ENCODE measurements at regions of chr9 and their contacts with region 1.

Region 1: GRCh38 chr9:21317956-21318923 is 13.1 kb upstream of the IFNA5 start:
- DNase-seq: no peak
- H3K4me3 ChIP-seq: no peak overlapping the region
- H3K27ac ChIP-seq: no peak overlapping the region
- H3K4me1 ChIP-seq: no peaks in the 10 kb centered on the region
- H3K27me3 ChIP-seq: no peaks in the 10 kb centered on the region
- CTCF ChIP-seq: peak in 2 of 3 experiments; percentile 60 to 64; a peak in 3 of 4 replicates
- EP300 ChIP-seq: no peak
- POLR2A ChIP-seq: no peak
- RAD21 ChIP-seq: peak; percentile 65 to 75

Region 2: DNA sequence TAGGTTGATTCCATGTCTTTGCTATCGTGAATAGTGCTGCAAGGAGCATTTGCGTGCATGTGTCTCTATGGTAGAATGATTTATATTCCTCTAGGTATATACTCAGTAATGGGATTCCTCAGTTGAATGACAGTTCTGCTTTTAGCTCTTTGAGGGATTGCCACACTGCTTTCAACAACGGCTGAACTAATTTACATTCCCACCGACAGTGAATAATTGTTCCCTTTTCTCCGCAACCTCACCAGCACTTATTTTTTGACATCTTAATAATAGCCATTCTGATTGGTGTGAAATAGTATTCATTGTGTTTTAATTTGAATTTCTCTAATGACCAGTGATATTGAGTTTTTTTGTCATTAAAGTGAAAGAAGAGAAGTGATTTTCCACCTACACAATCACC is 31.6 kb before region 1 on chr9:
- CTCF ChIA-PET with region 1: no interaction called
- POLR2A ChIA-PET with region 1: no interaction called
- DNase-seq: no peak
- H3K4me3 ChIP-seq: no peak overlapping the region
- H3K27ac ChIP-seq: no peak overlapping the region
- H3K4me1 ChIP-seq: no peaks in the 10 kb centered on the region
- H3K27me3 ChIP-seq: no peaks in the 10 kb centered on the region; a peak in 1 of 7 replicates
- CTCF ChIP-seq: no peak
- EP300 ChIP-seq: no peak
- POLR2A ChIP-seq: no peak
- RAD21 ChIP-seq: no peak

Region 3: DNA sequence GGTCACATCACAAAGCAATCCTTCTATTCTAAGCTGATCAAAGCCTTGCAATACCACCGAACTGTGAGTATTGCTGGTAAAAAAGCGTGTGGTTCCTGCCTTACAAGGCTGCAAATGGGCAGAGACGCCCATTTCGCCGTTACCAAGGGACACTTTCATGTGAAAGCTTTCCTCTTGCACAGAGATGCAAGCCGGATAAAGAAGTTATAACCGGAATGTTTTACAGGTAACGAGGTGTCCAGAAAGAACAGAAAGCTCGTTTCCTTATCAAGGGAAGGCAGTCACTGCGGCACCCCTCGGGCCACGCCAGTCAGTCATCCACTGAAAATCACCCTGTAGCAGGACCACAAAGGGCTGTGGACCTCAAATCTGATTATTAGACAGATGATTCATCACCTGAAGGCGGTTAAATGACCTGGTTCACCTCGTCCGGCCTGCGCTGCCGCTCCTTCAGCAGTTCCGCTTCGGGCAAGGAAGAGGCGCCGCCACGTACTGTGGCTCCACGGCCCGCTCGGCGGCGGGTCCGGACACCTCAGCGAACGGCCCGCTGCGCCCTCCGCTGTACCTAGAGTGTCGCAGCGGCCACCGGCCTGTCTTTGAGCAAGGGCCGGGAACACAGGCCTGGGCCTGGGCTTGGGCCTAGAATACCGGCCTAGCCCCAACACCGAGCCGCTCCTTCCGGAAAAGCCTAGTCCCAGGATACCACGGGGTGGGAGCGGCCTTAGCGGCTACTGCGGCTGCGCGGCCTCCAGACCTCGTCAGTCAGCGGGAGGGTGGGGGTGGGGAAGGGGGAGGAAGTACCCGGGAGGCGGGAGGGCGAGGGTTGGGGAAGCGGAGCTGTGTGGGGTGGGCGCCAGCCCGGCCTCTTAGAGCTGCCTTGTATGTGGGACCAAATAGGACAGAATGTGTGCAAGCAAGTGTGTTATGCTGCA is 16.7 kb after region 1 on chr9 and contains the start of gene KLHL9:
- CTCF ChIA-PET with region 1: interaction called, 25 read pairs
- POLR2A ChIA-PET with region 1: no interaction called
- DNase-seq: peak; percentile 63 to 88
- H3K4me3 ChIP-seq: peak within 1 kb of the TSS; percentile 76 to 100 (median 90)
- H3K27ac ChIP-seq: peak within 1 kb of the TSS; percentile 81
- H3K4me1 ChIP-seq: peaks cover 0 to 5% (median 0%) of the 10 kb centered on the region in 4 experiments; a peak in 2 of 7 replicates
- H3K27me3 ChIP-seq: no peaks in the 10 kb centered on the region
- CTCF ChIP-seq: no peak
- EP300 ChIP-seq: no peak
- POLR2A ChIP-seq: peak in 1 of 2 experiments; percentile 79; a peak in 2 of 3 replicates
- RAD21 ChIP-seq: no peak
- total RNA-seq, gene KLHL9: 14.7 and 15.7 TPM in 2 replicates

Measured in H1 (cell line).